ENCODE measurements at regions of chr1 and their contacts with region 1.

Region 1: DNA sequence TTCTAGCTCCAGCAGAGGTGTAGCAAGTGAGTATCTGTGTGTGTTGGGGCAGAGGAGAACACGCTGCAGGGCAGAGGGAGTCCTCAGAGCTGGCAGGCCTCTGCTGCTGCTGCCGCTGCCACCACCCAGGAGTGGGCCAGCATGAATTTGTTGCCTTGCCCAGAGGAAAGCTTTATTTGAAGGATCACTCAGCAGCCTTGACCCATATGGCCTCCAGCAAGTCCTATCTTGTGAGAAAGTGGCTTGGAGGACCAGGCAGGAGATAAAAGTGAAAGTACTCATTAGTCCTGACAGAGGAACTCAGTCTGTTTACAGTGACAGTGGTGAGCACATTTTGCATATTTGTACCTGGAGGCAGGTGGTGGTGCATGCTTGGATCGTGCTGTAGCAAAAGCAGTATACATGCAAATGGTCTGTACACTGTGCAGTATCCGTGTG is 3.1 kb downstream of the TRAF5 start:
- DNase-seq: peak; percentile 83
- H3K4me3 ChIP-seq: peak overlapping the region; percentile 89
- H3K27ac ChIP-seq: peak overlapping the region; percentile 77
- H3K4me1 ChIP-seq: peaks cover 80% of the 10 kb centered on the region
- CTCF ChIP-seq: no peak

Region 2: GRCh38 chr1:211359876-211360275 is 30.1 kb after region 1 on chr1:
- CTCF ChIA-PET with region 1: interaction called, 3 read pairs
- POLR2A ChIA-PET with region 1: interaction called, 14 read pairs
- intact Hi-C with region 1: no loop called
- DNase-seq: no peak
- H3K4me3 ChIP-seq: no peak overlapping the region
- H3K27ac ChIP-seq: no peak overlapping the region
- H3K4me1 ChIP-seq: no peaks in the 10 kb centered on the region
- CTCF ChIP-seq: no peak

Region 3: GRCh38 chr1:211492511-211493132 is 162.8 kb after region 1 on chr1:
- CTCF ChIA-PET with region 1: no interaction called
- POLR2A ChIA-PET with region 1: no interaction called
- intact Hi-C with region 1: no loop called
- DNase-seq: no peak
- H3K4me3 ChIP-seq: no peak overlapping the region
- H3K27ac ChIP-seq: no peak overlapping the region
- H3K4me1 ChIP-seq: no peaks in the 10 kb centered on the region
- CTCF ChIP-seq: no peak

Measured in OCI-LY7 (cell line).